K562 (cell line): ENCODE measurements at regions of chr2 and their contacts with region 1.

Region 1: DNA sequence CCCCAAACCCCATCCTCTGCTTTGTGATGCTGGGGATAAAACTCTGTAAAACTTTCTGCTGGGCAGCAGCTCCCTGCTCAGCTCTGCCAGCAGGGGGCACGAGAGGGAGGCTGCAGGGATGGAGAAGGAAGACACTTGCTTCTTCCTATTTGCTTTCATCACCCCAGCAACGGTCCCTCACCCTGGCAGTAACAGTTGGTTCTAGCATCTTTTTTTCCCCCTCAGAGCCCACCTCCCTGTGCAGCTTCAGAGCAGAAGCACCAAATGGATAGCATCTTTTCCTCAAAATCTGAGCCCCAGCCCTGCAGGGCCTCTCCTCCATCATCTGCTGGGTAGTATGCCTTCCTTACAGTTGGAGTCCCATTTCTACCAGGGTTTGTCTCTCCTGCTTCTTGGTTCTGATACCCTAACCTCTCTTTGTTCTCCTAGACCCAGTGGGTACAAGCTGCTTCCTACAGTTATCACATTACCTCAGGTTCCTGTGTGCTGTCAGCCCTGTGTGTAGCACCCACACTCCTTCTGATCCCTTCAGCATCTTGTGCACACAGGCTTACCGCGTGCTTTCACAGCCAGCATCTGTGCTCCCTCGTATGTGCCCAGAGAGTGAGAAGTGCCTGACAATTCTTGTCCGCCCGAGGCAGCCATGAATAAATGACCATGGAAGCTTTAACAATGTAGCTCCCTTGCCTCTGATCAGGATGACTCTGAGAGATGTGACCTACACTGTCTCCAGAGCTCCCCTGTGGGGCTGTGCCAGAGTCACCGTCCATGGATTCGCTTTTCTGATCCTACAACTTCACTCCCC is 14.5 kb downstream of the CKAP2L start:
- DNase-seq: peak; percentile 63 to 82 (median 74)
- ATAC-seq: peak; percentile 93
- H3K4me3 ChIP-seq: no peak overlapping the region
- H3K27ac ChIP-seq: no peak overlapping the region
- H3K4me1 ChIP-seq: no peaks in the 10 kb centered on the region; a peak in 1 of 5 replicates
- H3K27me3 ChIP-seq: no peaks in the 10 kb centered on the region
- CTCF ChIP-seq: peak; percentile 92 to 93 (median 93)
- EP300 ChIP-seq: 0 out of 2 replicates have a peak, but pooled peaks have one; percentile 2
- POLR2A ChIP-seq: no peak
- RAD21 ChIP-seq: peak; percentile 96

Region 2: GRCh38 chr2:112737542-112738232 is 12.3 kb before region 1 on chr2:
- CTCF ChIA-PET with region 1: no interaction called
- POLR2A ChIA-PET with region 1: interaction called, 19 read pairs
- in situ Hi-C with region 1: no loop called
- intact Hi-C with region 1: no loop called
- DNase-seq: no peak
- ATAC-seq: no peak
- H3K4me3 ChIP-seq: no peak overlapping the region
- H3K27ac ChIP-seq: no peak overlapping the region
- H3K4me1 ChIP-seq: peaks cover 0 to 5% of the 10 kb centered on the region in 2 experiments; a peak in 1 of 5 replicates
- H3K27me3 ChIP-seq: no peaks in the 10 kb centered on the region
- CTCF ChIP-seq: no peak
- EP300 ChIP-seq: no peak
- POLR2A ChIP-seq: no peak
- RAD21 ChIP-seq: no peak

Region 3: DNA sequence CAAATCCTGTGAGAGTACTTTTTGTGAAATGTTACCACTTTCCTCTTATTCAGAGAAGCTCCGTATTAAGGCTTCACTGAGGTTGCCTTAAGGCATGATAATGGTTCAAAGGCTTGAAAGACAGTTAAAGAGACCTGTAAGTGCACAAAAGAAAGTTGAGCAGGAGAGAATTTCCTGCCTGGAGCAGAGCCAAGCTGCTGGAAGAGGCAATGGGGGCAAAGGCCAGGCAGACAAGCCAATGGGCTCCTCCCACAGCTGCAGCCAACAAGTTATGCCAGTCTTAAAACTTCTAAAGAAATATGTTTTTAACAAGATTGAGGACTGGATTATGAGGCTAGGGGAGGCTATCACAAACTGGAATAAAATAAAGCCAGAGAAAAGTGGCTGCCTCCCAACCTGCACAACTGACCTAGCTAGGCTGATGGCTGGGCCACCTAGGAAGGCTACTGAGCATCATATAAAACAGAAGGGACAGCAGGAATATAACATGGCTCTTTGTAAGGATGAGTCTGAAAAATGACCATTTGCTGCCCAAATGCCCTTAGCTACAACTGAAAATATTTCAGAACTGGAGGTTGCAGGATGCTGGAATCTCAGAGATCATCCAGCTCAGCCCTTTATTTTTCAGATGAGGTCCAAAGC is 84.6 kb after region 1 on chr2:
- CTCF ChIA-PET with region 1: no interaction called
- POLR2A ChIA-PET with region 1: interaction called, 3 read pairs
- in situ Hi-C with region 1: no loop called
- intact Hi-C with region 1: loop called (anchors 5 kb)
- DNase-seq: no peak
- ATAC-seq: no peak
- H3K4me3 ChIP-seq: no peak overlapping the region
- H3K27ac ChIP-seq: no peak overlapping the region
- H3K4me1 ChIP-seq: peaks cover 0 to under 1% of the 10 kb centered on the region in 2 experiments; a peak in 1 of 5 replicates
- H3K27me3 ChIP-seq: peaks cover 13 to 25% of the 10 kb centered on the region in 2 experiments
- CTCF ChIP-seq: no peak
- EP300 ChIP-seq: no peak
- POLR2A ChIP-seq: no peak
- RAD21 ChIP-seq: no peak

Region 4: DNA sequence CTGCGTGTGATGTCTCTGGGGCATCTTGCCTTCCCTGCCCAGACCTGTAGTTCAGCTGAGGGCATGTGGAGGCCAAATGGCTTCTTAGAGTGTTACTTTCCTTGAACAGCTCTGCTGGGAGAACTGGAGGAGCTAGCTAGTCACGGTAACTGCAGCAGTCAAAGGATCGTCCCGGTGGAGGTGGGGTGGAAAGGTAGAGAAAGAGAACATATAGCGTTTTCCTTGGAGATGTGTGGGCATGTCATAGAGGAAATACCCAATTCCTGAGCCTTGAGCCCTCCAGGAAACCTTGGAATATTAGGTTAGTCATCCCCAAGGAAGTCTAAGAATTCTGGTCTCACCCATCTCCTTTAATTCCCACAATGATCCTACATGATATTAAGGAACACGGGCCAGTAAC is 127.5 kb after region 1 on chr2:
- CTCF ChIA-PET with region 1: interaction called, 3 read pairs
- POLR2A ChIA-PET with region 1: no interaction called
- in situ Hi-C with region 1: loop called (anchors 5 kb)
- intact Hi-C with region 1: loop called (anchors 1 kb)
- DNase-seq: no peak
- ATAC-seq: no peak
- H3K4me3 ChIP-seq: no peak overlapping the region
- H3K27ac ChIP-seq: no peak overlapping the region
- H3K4me1 ChIP-seq: peaks cover 0 to 9% of the 10 kb centered on the region in 2 experiments; a peak in 3 of 5 replicates
- H3K27me3 ChIP-seq: peaks cover 0 to 14% of the 10 kb centered on the region in 2 experiments; a peak in 1 of 5 replicates
- CTCF ChIP-seq: no peak
- EP300 ChIP-seq: no peak
- POLR2A ChIP-seq: no peak
- RAD21 ChIP-seq: no peak

Region 5: GRCh38 chr2:112884869-112885505 is 135.0 kb after region 1 on chr2:
- CTCF ChIA-PET with region 1: interaction called, 46 read pairs
- POLR2A ChIA-PET with region 1: interaction called, 3 read pairs
- in situ Hi-C with region 1: no loop called
- intact Hi-C with region 1: loop called (anchors 1 kb)
- DNase-seq: peak; percentile 78 to 92 (median 89)
- ATAC-seq: peak; percentile 97
- H3K4me3 ChIP-seq: no peak overlapping the region
- H3K27ac ChIP-seq: no peak overlapping the region
- H3K4me1 ChIP-seq: peaks cover 0 to 12% of the 10 kb centered on the region in 2 experiments; a peak in 3 of 5 replicates
- H3K27me3 ChIP-seq: no peaks in the 10 kb centered on the region
- CTCF ChIP-seq: peak; percentile 81 to 93 (median 92)
- EP300 ChIP-seq: no peak
- POLR2A ChIP-seq: no peak
- RAD21 ChIP-seq: peak; percentile 97